ENCODE measurements at regions of chr7 and their contacts with region 1.

Region 1: DNA sequence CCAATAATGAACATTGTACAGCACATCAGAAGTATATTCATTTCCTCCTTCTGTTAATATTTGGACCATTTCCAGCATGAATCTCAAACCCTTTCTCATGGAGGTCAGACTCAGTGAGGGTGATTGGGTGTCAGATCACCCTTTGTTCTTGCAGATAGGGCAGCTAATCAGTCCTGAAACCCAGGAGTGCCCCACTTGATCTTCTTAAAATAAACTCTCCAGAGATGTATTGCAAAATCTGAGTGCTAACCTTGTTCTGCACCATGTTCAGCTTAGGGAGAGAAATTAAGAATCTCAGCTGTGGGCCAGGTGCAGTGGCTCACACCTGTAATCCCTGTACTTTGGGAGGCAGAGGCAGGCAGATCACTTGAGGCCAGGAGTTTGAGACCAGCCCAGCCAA is 869.4 kb downstream of the TYW1 start:
- DNase-seq: no peak
- ATAC-seq: no peak
- H3K4me3 ChIP-seq: no peak overlapping the region
- H3K27ac ChIP-seq: no peak overlapping the region
- H3K4me1 ChIP-seq: no peaks in the 10 kb centered on the region
- H3K27me3 ChIP-seq: no peaks in the 10 kb centered on the region
- CTCF ChIP-seq: no peak

Region 2: DNA sequence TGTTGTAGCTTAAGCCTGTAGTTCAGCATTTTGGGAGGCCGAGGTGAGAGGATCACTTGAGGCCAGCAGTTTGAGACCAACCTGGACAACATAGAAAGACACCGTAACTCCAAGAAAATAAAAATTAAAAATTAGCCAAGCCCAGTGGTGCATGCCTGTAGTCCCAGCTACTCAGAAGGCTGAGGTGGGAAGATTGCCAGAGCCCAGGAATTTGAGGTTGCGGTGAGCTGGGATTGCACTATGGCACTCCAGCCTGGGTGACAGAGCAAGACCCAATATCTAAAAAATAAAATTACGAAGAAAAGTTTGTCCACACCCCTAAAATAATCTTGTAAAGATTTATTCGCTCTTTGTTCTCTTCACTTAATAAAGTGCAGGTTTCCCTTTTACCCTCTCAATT is 81.6 kb after region 1 on chr7:
- CTCF ChIA-PET with region 1: no interaction called
- POLR2A ChIA-PET with region 1: no interaction called
- in situ Hi-C with region 1: no loop called
- intact Hi-C with region 1: no loop called
- DNase-seq: no peak
- ATAC-seq: no peak
- H3K4me3 ChIP-seq: no peak overlapping the region
- H3K27ac ChIP-seq: no peak overlapping the region
- H3K4me1 ChIP-seq: no peaks in the 10 kb centered on the region
- H3K27me3 ChIP-seq: no peaks in the 10 kb centered on the region
- CTCF ChIP-seq: no peak

Region 3: GRCh38 chr7:68823996-68824780 is 958.1 kb after region 1 on chr7:
- CTCF ChIA-PET with region 1: no interaction called
- POLR2A ChIA-PET with region 1: no interaction called
- in situ Hi-C with region 1: no loop called
- intact Hi-C with region 1: no loop called
- DNase-seq: no peak
- ATAC-seq: no peak
- H3K4me3 ChIP-seq: no peak overlapping the region
- H3K27ac ChIP-seq: no peak overlapping the region
- H3K4me1 ChIP-seq: no peaks in the 10 kb centered on the region
- H3K27me3 ChIP-seq: no peaks in the 10 kb centered on the region
- CTCF ChIP-seq: no peak

Region 4: GRCh38 chr7:69173846-69174245 is 1307.8 kb after region 1 on chr7:
- CTCF ChIA-PET with region 1: no interaction called
- POLR2A ChIA-PET with region 1: no interaction called
- in situ Hi-C with region 1: no loop called
- intact Hi-C with region 1: loop called (anchors 5 kb)
- DNase-seq: no peak
- ATAC-seq: no peak
- H3K4me3 ChIP-seq: no peak overlapping the region
- H3K27ac ChIP-seq: no peak overlapping the region
- H3K4me1 ChIP-seq: no peaks in the 10 kb centered on the region
- H3K27me3 ChIP-seq: no peaks in the 10 kb centered on the region
- CTCF ChIP-seq: no peak